ENCODE measurements at regions of chr19 and their contacts with region 1.

Region 1: DNA sequence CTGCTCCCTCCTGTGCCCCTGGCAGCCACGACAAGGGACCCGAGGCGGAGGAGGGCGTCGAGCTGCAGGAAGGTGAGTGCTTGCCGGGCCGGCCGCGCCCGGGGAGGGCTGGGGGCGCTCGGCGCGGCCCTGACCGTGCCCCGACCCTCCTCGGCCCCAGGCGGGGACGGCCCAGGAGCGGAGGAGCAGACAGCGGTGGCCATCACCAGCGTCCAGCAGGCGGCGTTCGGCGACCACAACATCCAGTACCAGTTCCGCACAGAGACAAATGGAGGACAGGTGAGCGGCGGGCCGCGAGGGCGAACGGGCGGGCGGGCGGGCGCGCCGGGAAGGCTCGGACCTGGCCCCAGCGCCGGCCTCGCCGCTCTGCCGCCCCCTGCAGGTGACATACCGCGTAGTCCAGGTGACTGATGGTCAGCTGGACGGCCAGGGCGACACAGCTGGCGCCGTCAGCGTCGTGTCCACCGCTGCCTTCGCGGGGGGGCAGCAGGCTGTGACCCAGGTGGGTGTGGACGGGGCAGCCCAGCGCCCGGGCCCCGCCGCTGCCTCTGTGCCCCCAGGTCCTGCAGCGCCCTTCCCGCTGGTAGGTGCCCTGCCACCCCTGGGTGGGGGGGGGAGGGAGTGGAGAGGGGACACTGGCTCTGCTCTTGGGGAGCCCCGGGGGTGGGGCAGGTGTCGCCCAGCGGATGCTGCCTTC is 807 bp downstream of the USF2 start:
- DNase-seq: peak; percentile 97
- H3K4me3 ChIP-seq: peak overlapping the region; percentile 53 to 90 (median 64)
- H3K27ac ChIP-seq: peak overlapping the region; percentile 87 to 97 (median 94)
- H3K4me1 ChIP-seq: peaks cover 32 to 81% (median 66%) of the 10 kb centered on the region in 6 donors
- H3K27me3 ChIP-seq: no peaks in the 10 kb centered on the region
- CTCF ChIP-seq: peak; percentile 38 to 95 (median 91)
- POLR2A ChIP-seq: no peak

Region 2: GRCh38 chr19:35154525-35155406 is 114.8 kb before region 1 on chr19 and contains the start of gene FXYD5:
- intact Hi-C with region 1: loop called (anchors 5 kb)
- DNase-seq: peak; percentile 95
- H3K4me3 ChIP-seq: peak within 1 kb of the TSS; percentile 56 to 92 (median 72)
- H3K27ac ChIP-seq: peak within 1 kb of the TSS; percentile 77 to 98 (median 89)
- H3K4me1 ChIP-seq: peaks cover 5 to 58% (median 36%) of the 10 kb centered on the region in 6 donors
- H3K27me3 ChIP-seq: peaks cover 0 to 6% (median 0%) of the 10 kb centered on the region in 7 donors
- CTCF ChIP-seq: peak in 4 of 11 experiments; percentile 12 to 19 (median 16)
- POLR2A ChIP-seq: no peak
- total RNA-seq, gene FXYD5: 132 to 215 (median 162) TPM

Region 3: GRCh38 chr19:35330475-35330874 is 60.9 kb after region 1 on chr19:
- intact Hi-C with region 1: loop called (anchors 10 kb)
- DNase-seq: peak; percentile 93
- H3K4me3 ChIP-seq: peak overlapping the region in 7 of 8 donors; percentile 36 to 77 (median 48)
- H3K27ac ChIP-seq: peak overlapping the region in 7 of 8 donors; percentile 58 to 90 (median 82)
- H3K4me1 ChIP-seq: peaks cover 0 to 70% (median 27%) of the 10 kb centered on the region in 6 donors
- H3K27me3 ChIP-seq: peaks cover 0 to 13% (median 0%) of the 10 kb centered on the region in 7 donors
- CTCF ChIP-seq: no peak
- POLR2A ChIP-seq: peak; percentile 15 to 91 (median 90)

Region 4: DNA sequence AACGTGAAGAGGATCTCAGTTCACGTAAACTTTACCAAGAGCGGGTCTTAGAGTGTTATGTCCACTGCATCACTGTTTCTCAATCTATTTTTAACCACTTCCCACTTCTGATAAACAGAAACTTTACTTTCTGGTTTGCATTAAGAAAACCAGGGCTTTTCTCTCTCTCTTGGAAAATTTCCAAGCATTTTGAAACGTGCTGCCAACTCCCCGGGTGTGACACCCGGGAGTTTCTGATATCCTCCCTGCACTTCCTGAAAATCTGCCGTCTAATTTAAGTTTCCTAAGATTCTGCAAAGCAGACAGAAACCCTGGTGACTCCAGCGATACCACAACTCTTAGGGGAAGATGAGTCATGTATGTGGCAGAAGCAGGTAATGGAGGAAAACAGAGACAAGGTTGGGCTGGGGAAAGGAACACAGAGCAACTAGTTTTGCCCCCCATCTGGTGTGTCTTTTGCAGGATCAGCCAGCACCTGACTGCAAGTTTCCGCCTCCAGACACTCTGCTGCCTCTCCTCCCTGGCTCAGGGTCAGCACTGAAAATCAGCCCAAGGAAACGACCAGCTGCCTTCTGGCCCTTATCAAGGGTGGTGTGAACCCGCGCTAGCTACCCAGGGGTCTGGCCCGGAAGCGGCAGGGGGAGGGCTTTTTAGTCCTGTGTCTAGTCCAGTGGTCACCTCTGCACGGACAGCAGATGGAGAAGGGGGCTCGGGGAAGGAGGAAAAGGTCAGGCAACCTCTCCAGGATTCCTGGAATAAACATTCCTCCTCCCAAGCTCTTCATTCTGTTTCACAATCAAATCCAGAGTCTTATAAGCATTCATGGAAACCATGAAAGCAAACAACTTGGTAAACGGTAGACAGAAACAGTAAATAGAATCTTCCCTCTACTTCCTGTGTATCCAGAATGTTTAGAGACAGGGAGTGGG is 167.2 kb after region 1 on chr19:
- intact Hi-C with region 1: no loop called
- DNase-seq: no peak
- H3K4me3 ChIP-seq: peak overlapping the region in 1 of 8 donors; percentile 44
- H3K27ac ChIP-seq: peak overlapping the region in 7 of 8 donors; percentile 62 to 89 (median 83)
- H3K4me1 ChIP-seq: peaks cover 18 to 97% (median 57%) of the 10 kb centered on the region in 6 donors
- H3K27me3 ChIP-seq: peaks cover 0 to 26% (median 0%) of the 10 kb centered on the region in 7 donors
- CTCF ChIP-seq: no peak
- POLR2A ChIP-seq: no peak

Measured in spleen (tissue), 13 donors.